CD4-positive, alpha-beta T cell (primary cell): ENCODE measurements at regions of chr5 and their contacts with region 1.

Region 1: GRCh38 chr5:80407735-80408482 is at the start of gene ZFYVE16:
- DNase-seq: peak; percentile 91 to 99 (median 96)
- ATAC-seq: peak; percentile 87
- H3K4me3 ChIP-seq: peak within 1 kb of the TSS; percentile 99
- H3K4me3 Mint-ChIP-seq: peak within 1 kb of the TSS; percentile 99
- H3K27ac ChIP-seq: peak within 1 kb of the TSS; percentile 85 to 97
- H3K27ac Mint-ChIP-seq: peak within 1 kb of the TSS; percentile 93
- H3K4me1 ChIP-seq: peaks cover 15% of the 10 kb centered on the region
- H3K4me1 Mint-ChIP-seq: peaks cover 34% of the 10 kb centered on the region
- H3K27me3 ChIP-seq: no peaks in the 10 kb centered on the region
- H3K27me3 Mint-ChIP-seq: no peaks in the 10 kb centered on the region
- CTCF ChIP-seq: no peak
- total RNA-seq, gene ZFYVE16: 7.5 to 7.9 TPM

Region 2: DNA sequence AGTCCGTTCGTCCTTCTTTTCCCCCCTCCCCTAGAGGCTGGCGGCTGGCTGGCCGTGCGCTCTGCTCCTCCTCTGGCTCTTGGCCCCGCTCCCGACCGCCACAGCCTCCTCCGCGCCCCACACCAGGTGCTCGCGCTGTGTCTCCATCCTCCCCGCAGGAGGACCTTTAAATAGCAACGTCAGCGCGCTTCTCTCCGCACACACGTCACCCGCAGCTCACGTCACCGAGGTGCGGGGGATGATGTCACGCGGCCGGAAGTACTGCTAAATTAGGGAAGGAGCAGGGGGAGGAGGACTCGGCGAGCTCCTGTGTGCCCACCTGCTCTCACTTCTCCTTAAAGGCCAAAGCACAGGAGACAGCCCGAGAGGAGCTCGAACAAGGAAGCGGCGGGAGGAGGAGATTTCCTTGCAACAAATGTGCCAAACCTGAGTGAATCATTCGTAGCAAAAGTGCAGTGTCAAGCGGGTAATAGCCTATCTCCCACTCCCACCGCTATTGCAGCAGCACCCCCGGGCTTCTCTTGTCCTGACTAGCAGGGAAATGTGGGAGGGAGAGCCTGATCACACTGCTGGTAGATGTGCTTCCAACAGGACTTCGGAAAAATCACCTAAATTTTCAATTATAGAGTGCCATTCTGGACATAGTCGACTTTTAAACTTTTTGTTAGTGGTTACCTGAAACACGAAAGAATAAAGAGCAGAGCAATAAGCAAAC is 893.4 kb before region 1 on chr5:
- CTCF ChIA-PET with region 1: no interaction called
- POLR2A ChIA-PET with region 1: no interaction called
- intact Hi-C with region 1: loop called in 1 of 2 experiments (anchors 5 kb)
- DNase-seq: peak; percentile 76 to 97 (median 87)
- ATAC-seq: peak; percentile 85
- H3K4me3 ChIP-seq: peak overlapping the region; percentile 79
- H3K4me3 Mint-ChIP-seq: peak overlapping the region; percentile 98
- H3K27ac ChIP-seq: peak overlapping the region; percentile 69 to 89
- H3K27ac Mint-ChIP-seq: peak overlapping the region; percentile 96
- H3K4me1 ChIP-seq: peaks cover 19% of the 10 kb centered on the region
- H3K4me1 Mint-ChIP-seq: peaks cover 41% of the 10 kb centered on the region
- H3K27me3 ChIP-seq: peaks cover 5 to 15% of the 10 kb centered on the region in 2 experiments
- H3K27me3 Mint-ChIP-seq: peaks cover 34% of the 10 kb centered on the region
- CTCF ChIP-seq: no peak

Region 3: GRCh38 chr5:79990598-79991507 is 417.1 kb before region 1 on chr5 and contains the start of gene MTX3:
- CTCF ChIA-PET with region 1: no interaction called
- POLR2A ChIA-PET with region 1: interaction called, 3 read pairs
- intact Hi-C with region 1: loop called (anchors 5 kb)
- DNase-seq: peak; percentile 75 to 94 (median 83)
- ATAC-seq: peak; percentile 95
- H3K4me3 ChIP-seq: peak within 1 kb of the TSS; percentile 85
- H3K4me3 Mint-ChIP-seq: peak within 1 kb of the TSS; percentile 88
- H3K27ac ChIP-seq: peak within 1 kb of the TSS; percentile 59 to 68
- H3K27ac Mint-ChIP-seq: peak within 1 kb of the TSS; percentile 92
- H3K4me1 ChIP-seq: peaks cover 17% of the 10 kb centered on the region
- H3K4me1 Mint-ChIP-seq: peaks cover 18% of the 10 kb centered on the region
- H3K27me3 ChIP-seq: no peaks in the 10 kb centered on the region
- H3K27me3 Mint-ChIP-seq: peaks cover 12% of the 10 kb centered on the region
- CTCF ChIP-seq: no peak
- total RNA-seq, gene MTX3: 25.6 to 26.5 TPM

Region 4: GRCh38 chr5:80487829-80488721 is 80.2 kb after region 1 on chr5 and contains the start of gene FAM151B:
- CTCF ChIA-PET with region 1: no interaction called
- POLR2A ChIA-PET with region 1: interaction called, 4 read pairs
- intact Hi-C with region 1: loop called in 1 of 2 experiments (anchors 2 kb)
- DNase-seq: peak; percentile 45 to 91 (median 74)
- ATAC-seq: peak; percentile 88
- H3K4me3 ChIP-seq: peak within 1 kb of the TSS; percentile 58
- H3K4me3 Mint-ChIP-seq: peak within 1 kb of the TSS; percentile 88
- H3K27ac ChIP-seq: no peak within 1 kb of the TSS
- H3K27ac Mint-ChIP-seq: peak within 1 kb of the TSS; percentile 87
- H3K4me1 ChIP-seq: peaks cover 16% of the 10 kb centered on the region
- H3K4me1 Mint-ChIP-seq: peaks cover 21% of the 10 kb centered on the region
- H3K27me3 ChIP-seq: no peaks in the 10 kb centered on the region
- H3K27me3 Mint-ChIP-seq: no peaks in the 10 kb centered on the region
- CTCF ChIP-seq: no peak
- total RNA-seq, gene FAM151B: 0.33 to 0.61 TPM

Region 5: DNA sequence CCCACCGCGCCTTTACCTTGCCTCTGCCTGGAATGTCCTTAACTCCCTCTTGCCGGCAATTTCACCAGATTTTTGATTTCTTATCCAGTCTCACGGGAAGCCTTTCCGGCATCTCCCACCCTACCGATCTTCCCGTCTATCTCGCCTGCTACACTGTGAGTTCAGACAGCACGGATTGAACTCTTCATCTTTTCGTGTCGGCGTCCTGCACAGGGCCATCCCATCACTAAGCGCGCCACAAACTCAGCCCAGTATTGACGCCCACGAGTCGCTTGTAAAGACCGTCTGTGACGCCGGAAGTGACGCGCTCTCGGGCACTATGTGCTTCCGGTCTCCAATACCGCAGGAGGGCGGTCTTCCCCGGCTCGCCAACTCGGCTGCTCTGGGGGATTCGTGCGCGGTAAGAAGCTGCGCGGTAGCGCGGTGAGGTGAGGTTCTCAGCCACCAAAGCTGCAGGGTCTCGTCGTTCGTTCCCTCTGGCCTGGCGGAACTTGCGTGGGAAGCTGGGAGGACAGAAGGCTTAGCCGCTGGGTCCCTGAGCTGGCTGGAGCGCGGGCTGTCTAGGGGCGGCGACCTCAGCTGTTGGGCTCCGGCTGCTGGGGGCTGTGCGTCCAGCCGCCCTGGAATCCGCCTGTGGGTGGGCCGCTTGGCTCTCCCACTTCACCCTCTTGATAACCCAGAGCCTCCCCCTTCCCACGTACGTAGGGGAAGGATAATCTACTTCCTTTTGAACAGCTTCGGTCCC is 893.5 kb after region 1 on chr5 and contains the start of gene ZCCHC9:
- CTCF ChIA-PET with region 1: no interaction called
- POLR2A ChIA-PET with region 1: no interaction called
- intact Hi-C with region 1: loop called in 1 of 2 experiments (anchors 10 kb)
- DNase-seq: peak; percentile 87 to 98 (median 90)
- ATAC-seq: peak; percentile 91
- H3K4me3 ChIP-seq: peak within 1 kb of the TSS; percentile 92
- H3K4me3 Mint-ChIP-seq: peak within 1 kb of the TSS; percentile 94
- H3K27ac ChIP-seq: peak within 1 kb of the TSS; percentile 84
- H3K27ac Mint-ChIP-seq: peak within 1 kb of the TSS; percentile 91
- H3K4me1 ChIP-seq: peaks cover 25% of the 10 kb centered on the region
- H3K4me1 Mint-ChIP-seq: peaks cover 60% of the 10 kb centered on the region
- H3K27me3 ChIP-seq: no peaks in the 10 kb centered on the region
- H3K27me3 Mint-ChIP-seq: no peaks in the 10 kb centered on the region
- CTCF ChIP-seq: no peak
- total RNA-seq, gene ZCCHC9: 16.3 to 17.3 TPM